T-cell (primary cell): ENCODE measurements at regions of chr1 and their contacts with region 1.

Region 1: GRCh38 chr1:179293340-179294327 is at the start of gene SOAT1:
- DNase-seq: peak; percentile 79 to 96 (median 89)
- ATAC-seq: peak; percentile 95 to 98 (median 98)
- H3K4me3 ChIP-seq: peak within 1 kb of the TSS; percentile 89 to 94
- H3K4me3 Mint-ChIP-seq: peak within 1 kb of the TSS; percentile 89 to 99 (median 97)
- H3K27ac ChIP-seq: peak within 1 kb of the TSS; percentile 76
- H3K27ac Mint-ChIP-seq: peak within 1 kb of the TSS; percentile 94 to 97
- H3K4me1 ChIP-seq: peaks cover 30 to 41% of the 10 kb centered on the region in 2 experiments
- H3K4me1 Mint-ChIP-seq: peaks cover 42 to 52% (median 42%) of the 10 kb centered on the region in 3 donors
- H3K27me3 ChIP-seq: no peaks in the 10 kb centered on the region
- H3K27me3 Mint-ChIP-seq: no peaks in the 10 kb centered on the region
- total RNA-seq, gene SOAT1: 35.0 to 42.1 (median 39.1) TPM

Region 2: GRCh38 chr1:179081687-179082332 is 211.8 kb before region 1 on chr1 and contains the start of gene TOR3A:
- CTCF ChIA-PET with region 1: interaction called in 1 of 2 experiments, 13 read pairs
- POLR2A ChIA-PET with region 1: interaction called in 1 of 2 experiments, 3 read pairs
- DNase-seq: peak; percentile 39 to 81 (median 59)
- ATAC-seq: peak; percentile 73 to 87 (median 81)
- H3K4me3 ChIP-seq: peak within 1 kb of the TSS; percentile 75 to 83
- H3K4me3 Mint-ChIP-seq: peak within 1 kb of the TSS; percentile 94 to 98 (median 97)
- H3K27ac ChIP-seq: peak within 1 kb of the TSS; percentile 81
- H3K27ac Mint-ChIP-seq: peak within 1 kb of the TSS; percentile 92 to 93
- H3K4me1 ChIP-seq: peaks cover 11 to 36% of the 10 kb centered on the region in 2 experiments
- H3K4me1 Mint-ChIP-seq: peaks cover 26 to 35% (median 28%) of the 10 kb centered on the region in 3 donors
- H3K27me3 ChIP-seq: no peaks in the 10 kb centered on the region
- H3K27me3 Mint-ChIP-seq: no peaks in the 10 kb centered on the region
- total RNA-seq, gene TOR3A: 19.1 to 30.6 (median 23.7) TPM

Region 3: DNA sequence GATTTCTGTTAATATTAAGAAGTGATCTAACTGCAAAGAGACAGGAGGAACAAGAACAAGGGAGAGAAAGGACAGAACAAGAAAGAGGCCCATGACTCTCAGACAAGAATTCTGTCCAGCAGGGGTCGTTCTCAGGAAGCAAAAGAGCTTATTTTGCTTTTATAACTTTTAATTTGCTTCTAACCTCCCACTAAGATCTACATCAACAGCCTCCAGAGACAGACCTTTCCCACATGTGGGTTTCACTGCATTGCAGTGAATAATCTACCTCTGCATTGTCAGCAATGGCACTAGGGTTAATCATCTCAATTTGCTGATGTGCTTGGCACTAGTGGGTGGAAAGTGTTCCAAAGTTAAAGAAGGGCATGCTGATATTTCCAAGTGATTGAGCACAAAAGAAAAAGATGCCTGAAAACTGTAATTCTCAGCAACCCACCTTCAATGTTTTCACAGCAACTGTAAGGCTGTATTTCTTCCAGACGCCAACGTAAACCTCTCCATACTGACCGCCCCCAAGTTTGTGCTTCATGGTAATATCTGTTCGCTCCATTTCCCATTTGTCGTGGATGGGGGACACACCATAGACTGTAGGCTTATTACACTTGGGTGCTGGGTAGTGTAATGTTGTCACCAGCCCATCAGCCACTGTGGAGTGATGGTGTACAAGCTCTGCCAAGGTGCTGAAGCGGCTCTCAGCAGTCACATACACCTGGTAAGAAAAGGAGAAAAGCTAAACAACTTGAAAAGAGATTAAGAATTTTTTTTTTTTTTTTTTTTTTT is 172.3 kb before region 1 on chr1:
- CTCF ChIA-PET with region 1: interaction called, 5 to 11 read pairs
- POLR2A ChIA-PET with region 1: interaction called in 1 of 2 experiments, 5 read pairs
- DNase-seq: peak in 26 of 35 experiments; percentile 3 to 67 (median 32)
- ATAC-seq: peak in 3 of 4 experiments; percentile 20 to 52 (median 47)
- H3K4me3 ChIP-seq: no peak overlapping the region
- H3K4me3 Mint-ChIP-seq: no peak overlapping the region
- H3K27ac ChIP-seq: no peak overlapping the region
- H3K27ac Mint-ChIP-seq: no peak overlapping the region
- H3K4me1 ChIP-seq: no peaks in the 10 kb centered on the region
- H3K4me1 Mint-ChIP-seq: peaks cover 0 to 4% (median 3%) of the 10 kb centered on the region in 3 donors
- H3K27me3 ChIP-seq: no peaks in the 10 kb centered on the region
- H3K27me3 Mint-ChIP-seq: no peaks in the 10 kb centered on the region

Region 4: DNA sequence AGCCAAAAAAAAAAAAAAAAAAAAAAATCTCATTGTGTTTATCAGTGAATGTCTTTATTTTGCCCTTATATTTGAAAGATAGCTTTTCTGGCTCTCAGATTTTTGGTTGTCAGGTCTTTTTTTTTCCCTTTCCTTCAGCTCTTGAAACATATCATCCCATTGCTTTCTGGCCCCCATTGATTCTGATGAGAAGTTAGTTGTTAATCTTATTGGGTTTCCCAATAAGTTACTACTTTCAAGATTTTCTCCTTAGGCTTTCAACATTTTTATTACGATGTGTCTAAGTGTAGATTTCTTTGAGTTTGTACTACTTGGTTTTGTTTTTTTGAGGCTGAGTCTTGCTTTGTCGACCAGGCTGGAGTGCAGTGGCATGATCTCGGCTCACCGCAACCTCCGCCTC is 14.7 kb before region 1 on chr1:
- CTCF ChIA-PET with region 1: interaction called, 3 to 6 read pairs
- POLR2A ChIA-PET with region 1: interaction called in 1 of 2 experiments, 13 read pairs
- DNase-seq: no peak
- ATAC-seq: no peak
- H3K4me3 ChIP-seq: no peak overlapping the region
- H3K4me3 Mint-ChIP-seq: no peak overlapping the region
- H3K27ac ChIP-seq: no peak overlapping the region
- H3K27ac Mint-ChIP-seq: no peak overlapping the region
- H3K4me1 ChIP-seq: no peaks in the 10 kb centered on the region
- H3K4me1 Mint-ChIP-seq: no peaks in the 10 kb centered on the region
- H3K27me3 ChIP-seq: no peaks in the 10 kb centered on the region
- H3K27me3 Mint-ChIP-seq: peaks cover 0 to 3% of the 10 kb centered on the region in 2 donors